ENCODE measurements at regions of chr10 and their contacts with region 1.

Region 1: GRCh38 chr10:125538947-125539731 is 143.8 kb downstream of the TEX36 start:
- DNase-seq: no peak

Region 2: GRCh38 chr10:124217906-124218804 is 1321.0 kb before region 1 on chr10:
- intact Hi-C with region 1: loop called in 1 of 2 experiments (anchors 5 kb)
- DNase-seq: no peak

Region 3: GRCh38 chr10:125015312-125015944 is 523.7 kb before region 1 on chr10:
- intact Hi-C with region 1: no loop called
- DNase-seq: peak; percentile 90

Region 4: DNA sequence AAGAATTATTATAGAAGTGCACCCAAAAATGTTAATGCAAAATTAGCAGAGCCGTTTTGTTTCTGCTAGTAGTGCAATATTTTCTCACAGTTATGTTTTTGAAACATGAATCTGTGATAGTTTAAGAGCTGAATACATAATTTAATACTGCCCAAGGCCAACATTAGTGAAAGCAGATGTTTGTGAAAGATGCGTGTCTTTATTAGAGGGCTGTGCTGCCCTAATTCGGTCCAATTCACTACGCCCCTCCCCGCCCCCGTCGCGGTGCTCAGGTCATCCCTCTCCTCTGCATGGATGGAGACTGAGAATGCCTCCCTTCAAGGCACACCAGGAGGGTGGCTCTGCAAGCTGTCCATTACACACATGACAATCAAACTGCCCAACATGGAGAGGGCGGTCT is 28.1 kb before region 1 on chr10:
- intact Hi-C with region 1: loop called in 1 of 2 experiments (anchors 1 kb)
- DNase-seq: no peak

Measured in posterior vena cava (tissue), 2 donors.